ENCODE measurements at regions of chr6 and their contacts with region 1.

Region 1: DNA sequence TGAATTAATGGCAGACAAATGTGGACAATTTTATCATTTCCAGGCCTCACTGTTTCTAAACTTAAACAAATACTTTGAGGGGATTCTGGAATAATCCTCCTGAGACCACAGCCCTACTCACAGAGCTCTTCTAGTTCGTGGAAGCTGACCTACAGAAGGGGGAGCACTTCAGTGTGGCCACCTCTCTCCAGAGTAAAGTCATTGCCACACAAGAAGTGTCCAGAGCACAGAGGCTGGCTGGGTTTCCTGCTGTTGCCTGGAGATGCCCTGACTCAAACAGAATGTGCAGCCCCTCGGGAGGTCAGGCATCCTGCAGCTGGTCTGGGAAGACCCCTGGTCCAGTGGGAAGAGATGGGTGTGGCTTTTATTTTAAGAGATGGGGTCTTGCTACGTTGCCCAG is 110.9 kb downstream of the QRSL1 start:
- DNase-seq: no peak
- H3K4me3 ChIP-seq: no peak overlapping the region
- H3K27ac ChIP-seq: peak overlapping the region in 1 of 2 donors; percentile 31
- H3K4me1 ChIP-seq: no peaks in the 10 kb centered on the region
- H3K27me3 ChIP-seq: no peaks in the 10 kb centered on the region
- CTCF ChIP-seq: no peak
- POLR2A ChIP-seq: no peak

Region 2: DNA sequence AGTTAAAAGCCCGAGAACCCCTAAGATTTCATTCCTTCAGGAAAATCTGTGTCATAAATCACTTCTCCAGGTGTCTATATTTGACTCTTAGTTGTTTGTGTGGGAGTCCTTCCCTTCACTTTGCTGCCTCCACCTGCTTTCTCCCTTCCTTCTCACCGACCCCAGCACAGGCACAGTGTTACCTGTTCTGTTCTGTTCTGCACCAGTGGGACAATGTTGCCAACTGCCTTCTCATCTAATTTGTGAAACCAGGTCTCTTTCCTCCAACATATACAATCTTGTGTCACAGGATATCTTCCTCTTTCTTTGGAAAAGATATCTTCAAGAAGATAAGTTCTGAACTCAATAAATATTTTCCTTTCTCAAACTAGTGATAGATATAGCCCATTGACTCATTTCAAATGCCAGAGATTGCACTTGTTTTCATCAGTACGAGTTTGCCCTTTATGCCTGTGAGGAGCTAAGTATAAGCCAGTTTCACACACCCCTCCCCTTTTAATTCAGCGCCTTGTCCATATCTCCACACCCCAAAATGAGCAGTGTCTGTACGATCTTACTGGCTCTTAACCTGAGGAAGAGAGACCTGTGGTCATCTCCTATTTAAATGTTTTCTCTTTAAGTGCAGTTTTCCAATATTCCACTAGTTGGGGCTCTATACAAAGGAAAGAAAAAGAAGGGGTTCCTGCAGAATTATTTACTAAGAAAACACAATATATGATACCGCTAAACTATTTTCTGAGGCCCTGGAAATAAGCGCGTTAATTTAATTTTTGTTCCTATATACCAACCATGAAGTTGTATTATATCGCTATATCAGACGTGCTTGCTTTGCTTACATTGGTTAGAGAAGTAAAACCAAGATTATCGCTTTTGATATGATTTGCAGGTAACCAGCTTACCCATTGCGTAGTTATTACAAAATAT is 1255.8 kb before region 1 on chr6:
- intact Hi-C with region 1: loop called (anchors 5 kb)
- DNase-seq: no peak
- H3K4me3 ChIP-seq: no peak overlapping the region
- H3K27ac ChIP-seq: no peak overlapping the region
- H3K4me1 ChIP-seq: no peaks in the 10 kb centered on the region
- H3K27me3 ChIP-seq: no peaks in the 10 kb centered on the region
- CTCF ChIP-seq: peak; percentile 82 to 90 (median 83)
- POLR2A ChIP-seq: no peak

Region 3: GRCh38 chr6:106860940-106861339 is 120.7 kb after region 1 on chr6:
- intact Hi-C with region 1: loop called (anchors 5 kb)
- DNase-seq: no peak
- H3K4me3 ChIP-seq: no peak overlapping the region
- H3K27ac ChIP-seq: no peak overlapping the region
- H3K4me1 ChIP-seq: no peaks in the 10 kb centered on the region
- H3K27me3 ChIP-seq: no peaks in the 10 kb centered on the region
- CTCF ChIP-seq: no peak
- POLR2A ChIP-seq: no peak

Measured in breast epithelium (tissue), 4 donors.